IMR-90 (cell line): ENCODE measurements at regions of chr4 and their contacts with region 1.

Region 1: DNA sequence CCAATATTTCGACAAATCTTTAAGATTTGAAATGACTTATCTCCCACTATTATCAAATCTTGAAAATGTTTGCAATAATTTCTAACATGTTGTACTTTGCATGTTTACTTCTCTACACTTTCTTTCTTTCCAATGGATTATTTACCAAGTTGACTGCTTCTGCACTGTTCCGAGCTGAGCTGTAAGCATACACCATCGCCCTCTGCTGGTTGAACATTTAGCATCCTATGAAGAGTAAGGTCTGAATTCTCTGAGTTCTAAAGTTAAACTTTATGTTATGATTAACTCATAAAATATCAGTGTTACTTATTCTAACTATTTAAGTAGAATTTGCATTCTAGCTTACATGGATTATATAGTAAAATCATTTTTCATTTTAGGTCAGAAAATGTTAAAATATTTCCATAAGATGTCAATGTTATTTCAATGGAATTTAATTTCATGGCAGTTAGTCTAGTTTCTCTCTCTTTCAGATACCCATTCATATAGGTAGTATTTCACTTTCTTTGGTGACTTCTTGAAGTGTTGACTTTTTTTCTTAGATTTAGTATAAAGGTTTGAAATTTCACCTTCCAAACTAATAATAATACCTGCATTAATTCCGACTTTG is 137.4 kb downstream of the DKK2 start:
- DNase-seq: peak; percentile 53
- ATAC-seq: peak; percentile 60; the same call in 1 of the 2 replicates
- H3K4me3 ChIP-seq: no peak overlapping the region
- H3K27ac ChIP-seq: no peak overlapping the region
- H3K4me1 ChIP-seq: no peaks in the 10 kb centered on the region
- H3K27me3 ChIP-seq: no peaks in the 10 kb centered on the region
- CTCF ChIP-seq: peak; percentile 55
- POLR2A ChIP-seq: no peak
- RAD21 ChIP-seq: peak; percentile 52

Region 2: DNA sequence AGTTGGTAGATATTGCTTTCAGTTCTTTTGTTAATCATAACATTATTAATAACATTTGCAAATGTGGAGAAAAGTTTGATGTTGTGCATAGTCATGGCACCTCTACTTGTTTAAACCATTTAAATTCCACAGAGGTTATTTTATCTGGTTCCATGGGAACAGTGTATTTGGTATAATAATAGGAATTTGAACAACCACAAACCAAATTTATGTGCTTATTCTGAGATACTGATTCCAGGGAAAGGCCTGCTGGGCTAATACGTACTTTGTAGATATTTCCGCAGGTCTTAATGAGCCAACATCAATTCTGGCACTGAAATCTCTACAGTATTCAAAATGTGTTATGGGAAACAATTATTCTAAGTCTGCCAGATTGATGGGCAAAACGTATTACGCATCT is 181.6 kb before region 1 on chr4:
- CTCF ChIA-PET with region 1: no interaction called
- POLR2A ChIA-PET with region 1: no interaction called
- dilution Hi-C with region 1: no loop called
- in situ Hi-C with region 1: no loop called
- intact Hi-C with region 1: no loop called
- DNase-seq: no peak
- ATAC-seq: no peak
- H3K4me3 ChIP-seq: no peak overlapping the region
- H3K27ac ChIP-seq: no peak overlapping the region
- H3K4me1 ChIP-seq: no peaks in the 10 kb centered on the region
- H3K27me3 ChIP-seq: no peaks in the 10 kb centered on the region
- CTCF ChIP-seq: no peak
- POLR2A ChIP-seq: no peak
- RAD21 ChIP-seq: no peak

Region 3: GRCh38 chr4:107631560-107631959 is 732.8 kb after region 1 on chr4:
- CTCF ChIA-PET with region 1: no interaction called
- POLR2A ChIA-PET with region 1: no interaction called
- dilution Hi-C with region 1: no loop called
- in situ Hi-C with region 1: no loop called
- intact Hi-C with region 1: no loop called
- DNase-seq: no peak
- ATAC-seq: no peak
- H3K4me3 ChIP-seq: no peak overlapping the region
- H3K27ac ChIP-seq: no peak overlapping the region
- H3K4me1 ChIP-seq: no peaks in the 10 kb centered on the region
- H3K27me3 ChIP-seq: no peaks in the 10 kb centered on the region
- CTCF ChIP-seq: no peak
- POLR2A ChIP-seq: no peak
- RAD21 ChIP-seq: no peak

Region 4: GRCh38 chr4:107736924-107737448 is 838.3 kb after region 1 on chr4:
- CTCF ChIA-PET with region 1: no interaction called
- POLR2A ChIA-PET with region 1: no interaction called
- dilution Hi-C with region 1: no loop called
- in situ Hi-C with region 1: no loop called
- intact Hi-C with region 1: loop called (anchors 5 kb)
- DNase-seq: peak; percentile 57
- ATAC-seq: peak; percentile 73
- H3K4me3 ChIP-seq: no peak overlapping the region
- H3K27ac ChIP-seq: no peak overlapping the region
- H3K4me1 ChIP-seq: peaks cover 8% of the 10 kb centered on the region
- H3K27me3 ChIP-seq: peaks cover 4% of the 10 kb centered on the region; the same call in 1 of the 2 replicates
- CTCF ChIP-seq: peak; percentile 70
- POLR2A ChIP-seq: no peak
- RAD21 ChIP-seq: peak; percentile 83